Heart right ventricle (tissue), 16 donors: ENCODE measurements at regions of chr22 and their contacts with region 1.

Region 1: DNA sequence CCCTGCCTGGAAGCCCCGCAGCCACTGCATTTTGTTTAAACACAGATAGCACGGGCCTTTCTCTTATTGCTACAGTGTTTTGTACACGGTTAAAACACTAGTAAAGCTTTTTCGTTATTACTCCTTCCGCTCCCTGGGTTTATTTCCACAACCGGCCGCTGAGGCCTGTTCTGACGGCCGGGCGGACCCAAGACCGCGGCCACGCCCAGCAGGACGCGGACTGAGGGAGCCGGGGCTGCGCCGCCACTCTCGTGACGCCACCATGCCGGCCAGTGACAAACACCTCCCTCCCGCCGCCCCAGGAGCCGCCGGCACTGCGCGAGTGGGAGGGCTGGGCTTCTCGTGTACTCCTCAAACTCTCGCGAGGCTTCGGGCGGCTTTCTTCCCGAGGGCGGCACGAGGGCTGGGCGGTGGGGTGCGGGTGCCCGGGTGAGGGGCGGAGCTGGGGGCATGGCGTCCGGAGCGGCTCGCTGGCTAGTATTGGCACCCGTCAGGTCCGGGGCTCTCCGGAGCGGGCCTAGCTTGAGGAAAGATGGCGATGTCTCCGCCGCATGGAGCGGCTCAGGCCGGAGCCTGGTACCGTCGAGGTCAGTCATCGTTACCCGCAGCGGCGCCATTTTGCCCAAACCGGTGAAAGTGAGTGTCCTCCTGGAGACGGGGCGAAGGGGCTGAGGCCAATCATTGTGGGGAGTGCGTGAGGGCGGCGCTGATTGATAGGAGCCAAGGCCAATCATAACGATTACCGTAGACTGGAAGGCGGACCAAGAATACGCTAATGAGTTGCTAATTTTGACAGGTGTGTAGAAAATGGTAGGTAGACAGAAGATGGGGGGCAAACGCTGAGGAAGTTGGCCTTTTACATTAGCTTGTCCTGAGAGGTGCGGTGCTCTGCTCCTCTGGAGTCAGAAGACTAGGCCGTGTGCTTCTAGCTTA is at the start of gene SMDT1:
- DNase-seq: peak; percentile 99 to 100
- ATAC-seq: peak; percentile 93 to 96 (median 94)
- H3K4me3 ChIP-seq: peak within 1 kb of the TSS; percentile 50 to 79 (median 66)
- H3K27ac ChIP-seq: peak within 1 kb of the TSS; percentile 92 to 100 (median 98)
- H3K4me1 ChIP-seq: peaks cover 5 to 63% (median 35%) of the 10 kb centered on the region in 9 donors
- H3K27me3 ChIP-seq: no peaks in the 10 kb centered on the region
- CTCF ChIP-seq: peak in 1 of 9 donors; percentile 5
- total RNA-seq, gene SMDT1: 111 to 193 (median 128) TPM

Region 2: DNA sequence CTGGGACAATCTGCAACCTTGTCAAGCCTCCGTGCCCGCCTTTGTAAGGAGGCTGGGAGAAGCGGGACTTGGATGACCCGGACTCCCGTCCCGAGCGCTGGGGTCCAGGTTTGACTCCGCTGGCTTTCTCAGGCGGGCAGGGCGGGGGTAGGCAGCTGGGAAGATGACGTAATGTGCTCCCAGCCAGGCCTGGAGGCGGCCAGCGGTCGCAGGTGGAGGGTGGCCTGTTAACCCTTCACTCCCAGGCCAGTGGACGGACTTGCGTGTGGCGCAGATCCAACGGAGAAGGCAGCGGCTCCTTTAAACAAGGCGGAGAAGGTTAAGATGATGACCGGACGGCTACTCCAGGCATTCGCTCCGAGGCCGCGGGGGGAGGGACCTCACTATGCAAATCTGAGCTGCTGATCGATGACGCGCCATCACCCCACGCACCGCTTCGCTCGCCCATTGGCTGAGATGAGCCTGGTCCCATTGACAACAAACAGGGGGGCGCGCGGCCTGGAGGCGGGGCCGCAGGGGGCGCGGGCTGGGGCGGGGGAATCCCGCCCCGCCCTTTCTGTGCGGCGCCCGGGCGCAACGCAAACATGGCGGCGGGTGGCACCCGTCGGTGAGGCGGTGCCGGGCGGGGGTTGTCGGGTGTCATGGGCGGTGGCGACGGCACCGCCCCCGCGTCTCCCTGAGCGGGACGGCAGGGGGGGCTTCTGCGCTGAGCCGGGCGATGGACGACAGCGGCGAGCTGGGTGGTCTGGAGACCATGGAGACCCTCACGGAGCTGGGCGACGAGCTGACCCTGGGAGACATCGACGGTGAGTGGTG is 246.8 kb before region 1 on chr22 and contains the start of gene SREBF2:
- intact Hi-C with region 1: loop called in 2 of 10 experiments (anchors 10 kb)
- DNase-seq: peak; percentile 99 to 100
- ATAC-seq: peak; percentile 96 to 99 (median 98)
- H3K4me3 ChIP-seq: peak within 1 kb of the TSS; percentile 68 to 96 (median 92)
- H3K27ac ChIP-seq: peak within 1 kb of the TSS; percentile 82 to 98 (median 94)
- H3K4me1 ChIP-seq: peaks cover 3 to 37% (median 22%) of the 10 kb centered on the region in 9 donors
- H3K27me3 ChIP-seq: no peaks in the 10 kb centered on the region
- CTCF ChIP-seq: no peak
- total RNA-seq, gene SREBF2: 57.1 to 94.3 (median 75.8) TPM

Region 3: DNA sequence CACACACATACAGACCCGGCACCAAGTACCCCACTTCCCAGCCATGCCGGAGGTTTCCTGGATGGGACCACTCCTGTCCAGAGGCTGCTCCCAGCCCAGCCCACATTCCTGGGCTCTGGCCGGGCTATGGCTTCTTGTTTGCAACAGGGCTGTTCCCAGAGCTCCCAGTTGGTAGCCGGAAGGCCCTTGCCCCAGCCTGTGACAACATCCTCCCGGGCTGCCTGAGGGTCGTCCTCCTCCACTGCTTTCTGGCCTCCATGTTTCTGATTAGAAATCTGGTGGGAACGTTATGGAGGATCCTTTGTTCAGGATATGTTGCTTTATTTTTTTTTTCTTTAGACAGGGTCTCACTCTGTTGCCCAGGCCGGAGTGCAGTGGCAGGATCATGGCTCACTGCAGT is 52.0 kb after region 1 on chr22:
- intact Hi-C with region 1: no loop called
- DNase-seq: no peak
- ATAC-seq: no peak
- H3K4me3 ChIP-seq: no peak overlapping the region
- H3K27ac ChIP-seq: no peak overlapping the region
- H3K4me1 ChIP-seq: no peaks in the 10 kb centered on the region
- H3K27me3 ChIP-seq: peaks cover 0 to 10% (median 0%) of the 10 kb centered on the region in 7 donors
- CTCF ChIP-seq: no peak